Activated CD4-positive, alpha-beta T cell treated with anti-CD3 and anti-CD28 coated beads for 36 hours (primary cell): ENCODE measurements at regions of chr16 and their contacts with region 1.

Region 1: GRCh38 chr16:3150346-3151218 is 15.8 kb downstream of the ZNF213 start:
- DNase-seq: peak; percentile 99
- ATAC-seq: peak; percentile 85
- H3K4me3 Mint-ChIP-seq: peak overlapping the region; percentile 79
- H3K27ac Mint-ChIP-seq: peak overlapping the region; percentile 89
- H3K4me1 Mint-ChIP-seq: peaks cover 22% of the 10 kb centered on the region
- H3K27me3 Mint-ChIP-seq: peaks cover 2% of the 10 kb centered on the region

Region 2: GRCh38 chr16:2854700-2855309 is 295.8 kb before region 1 on chr16:
- CTCF ChIA-PET with region 1: no interaction called
- POLR2A ChIA-PET with region 1: no interaction called
- intact Hi-C with region 1: no loop called
- DNase-seq: peak; percentile 53
- ATAC-seq: no peak
- H3K4me3 Mint-ChIP-seq: no peak overlapping the region
- H3K27ac Mint-ChIP-seq: no peak overlapping the region
- H3K4me1 Mint-ChIP-seq: peaks cover 4% of the 10 kb centered on the region
- H3K27me3 Mint-ChIP-seq: peaks cover 3% of the 10 kb centered on the region

Region 3: GRCh38 chr16:3003582-3004302 is 146.8 kb before region 1 on chr16:
- CTCF ChIA-PET with region 1: no interaction called
- POLR2A ChIA-PET with region 1: no interaction called
- intact Hi-C with region 1: loop called in 1 of 2 experiments (anchors 1 kb)
- DNase-seq: peak; percentile 99
- ATAC-seq: peak; percentile 100
- H3K4me3 Mint-ChIP-seq: peak overlapping the region; percentile 32
- H3K27ac Mint-ChIP-seq: no peak overlapping the region
- H3K4me1 Mint-ChIP-seq: peaks cover 23% of the 10 kb centered on the region
- H3K27me3 Mint-ChIP-seq: peaks cover 6% of the 10 kb centered on the region

Region 4: DNA sequence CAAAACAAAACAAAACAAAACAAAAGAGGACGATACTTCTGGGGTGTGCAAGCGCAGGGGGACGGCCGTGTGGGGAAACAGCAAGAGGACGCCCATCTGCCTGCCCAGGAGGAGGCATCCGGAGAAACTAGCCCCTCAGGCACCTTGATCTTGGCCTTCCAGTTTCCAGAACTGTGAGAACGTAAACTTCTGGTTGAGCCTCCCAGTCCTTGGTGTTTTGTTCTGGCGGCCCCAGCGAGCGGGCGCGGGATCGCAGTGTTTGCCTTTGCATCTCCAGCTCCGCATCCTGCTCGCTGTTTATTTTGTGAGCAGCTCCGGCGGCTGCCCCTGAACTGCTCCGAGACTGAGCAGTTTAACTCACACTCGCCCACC is 105.2 kb before region 1 on chr16:
- CTCF ChIA-PET with region 1: no interaction called
- POLR2A ChIA-PET with region 1: no interaction called
- intact Hi-C with region 1: no loop called
- DNase-seq: peak; percentile 64
- ATAC-seq: peak; percentile 59
- H3K4me3 Mint-ChIP-seq: peak overlapping the region; percentile 63
- H3K27ac Mint-ChIP-seq: no peak overlapping the region
- H3K4me1 Mint-ChIP-seq: peaks cover 14% of the 10 kb centered on the region
- H3K27me3 Mint-ChIP-seq: peaks cover 43% of the 10 kb centered on the region

Region 5: GRCh38 chr16:3074860-3075522 is 75.6 kb before region 1 on chr16:
- CTCF ChIA-PET with region 1: interaction called, 3 read pairs
- POLR2A ChIA-PET with region 1: no interaction called
- intact Hi-C with region 1: loop called in 1 of 2 experiments (anchors 1 kb)
- DNase-seq: peak; percentile 91
- ATAC-seq: peak; percentile 62
- H3K4me3 Mint-ChIP-seq: peak overlapping the region; percentile 78
- H3K27ac Mint-ChIP-seq: peak overlapping the region; percentile 99
- H3K4me1 Mint-ChIP-seq: peaks cover 90% of the 10 kb centered on the region
- H3K27me3 Mint-ChIP-seq: no peaks in the 10 kb centered on the region

Region 6: DNA sequence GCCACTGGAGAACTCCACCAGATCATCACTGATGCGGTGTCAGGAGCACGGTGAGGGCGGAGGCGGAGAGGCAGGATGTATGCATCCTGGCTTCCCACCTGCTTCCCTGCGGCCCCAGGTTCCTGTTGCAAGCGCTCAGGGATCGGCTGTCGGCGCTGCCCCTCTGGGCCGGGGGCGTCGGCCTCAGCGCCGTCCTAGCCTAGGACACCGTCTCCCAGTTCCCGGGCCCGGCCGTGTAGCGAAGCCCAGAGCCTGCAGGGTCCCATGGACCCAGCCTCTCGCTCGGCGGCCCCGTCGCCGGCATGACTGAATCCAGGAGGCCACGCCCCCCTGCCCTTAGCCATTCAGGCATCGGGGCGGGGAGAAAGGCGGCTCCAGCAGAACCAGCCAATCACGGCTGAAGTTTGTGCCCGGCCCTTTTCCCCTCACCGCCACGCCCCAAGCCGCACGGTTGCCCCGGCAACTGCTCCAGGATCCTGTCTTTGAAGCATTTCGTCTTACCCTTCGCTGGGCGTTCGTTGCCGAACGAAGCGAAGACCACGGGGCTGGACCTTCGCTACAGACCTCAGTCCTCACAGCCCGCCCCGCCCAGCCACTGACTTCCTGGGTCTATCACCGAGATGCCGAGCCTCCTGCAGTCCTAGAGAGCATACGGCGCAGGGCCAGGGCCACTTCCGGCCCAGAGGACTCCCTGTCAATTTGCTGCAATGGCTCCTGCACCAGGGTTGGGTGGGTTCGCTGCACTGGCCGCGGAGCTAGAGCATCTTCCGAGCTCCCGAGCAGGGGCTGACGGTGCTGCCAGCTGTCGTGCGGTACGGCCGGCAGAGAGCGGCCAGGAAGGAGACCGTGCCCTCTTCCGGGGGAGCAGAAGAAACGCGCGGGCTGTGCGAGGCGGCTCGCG is 26.3 kb before region 1 on chr16:
- CTCF ChIA-PET with region 1: interaction called, 21 read pairs
- POLR2A ChIA-PET with region 1: interaction called, 5 read pairs
- intact Hi-C with region 1: loop called in 1 of 2 experiments (anchors 1 kb)
- DNase-seq: peak; percentile 99
- ATAC-seq: peak; percentile 92
- H3K4me3 Mint-ChIP-seq: peak overlapping the region; percentile 90
- H3K27ac Mint-ChIP-seq: peak overlapping the region; percentile 90
- H3K4me1 Mint-ChIP-seq: peaks cover 30% of the 10 kb centered on the region
- H3K27me3 Mint-ChIP-seq: no peaks in the 10 kb centered on the region

Region 7: GRCh38 chr16:3173892-3174617 is 23.5 kb after region 1 on chr16:
- CTCF ChIA-PET with region 1: interaction called, 6 read pairs
- POLR2A ChIA-PET with region 1: interaction called, 4 read pairs
- intact Hi-C with region 1: loop called (anchors 1 to 2 kb)
- DNase-seq: peak; percentile 61
- ATAC-seq: peak; percentile 10
- H3K4me3 Mint-ChIP-seq: peak overlapping the region; percentile 47
- H3K27ac Mint-ChIP-seq: peak overlapping the region; percentile 26
- H3K4me1 Mint-ChIP-seq: peaks cover 37% of the 10 kb centered on the region
- H3K27me3 Mint-ChIP-seq: peaks cover 51% of the 10 kb centered on the region

Region 8: GRCh38 chr16:3234543-3235541 is 84.3 kb after region 1 on chr16 and contains the start of gene ZNF200:
- CTCF ChIA-PET with region 1: no interaction called
- POLR2A ChIA-PET with region 1: no interaction called
- intact Hi-C with region 1: loop called in 1 of 2 experiments (anchors 1 kb)
- DNase-seq: peak; percentile 98
- ATAC-seq: peak; percentile 94
- H3K4me3 Mint-ChIP-seq: peak within 1 kb of the TSS; percentile 89
- H3K27ac Mint-ChIP-seq: peak within 1 kb of the TSS; percentile 96
- H3K4me1 Mint-ChIP-seq: peaks cover 30% of the 10 kb centered on the region
- H3K27me3 Mint-ChIP-seq: no peaks in the 10 kb centered on the region
- total RNA-seq, gene ZNF200: 8.3 to 9.0 TPM

Region 9: GRCh38 chr16:3400779-3401688 is 250.5 kb after region 1 on chr16 and contains the starts of genes ZNF174 and ZSCAN32:
- CTCF ChIA-PET with region 1: interaction called, 3 read pairs
- POLR2A ChIA-PET with region 1: no interaction called
- intact Hi-C with region 1: loop called in 1 of 2 experiments (anchors 1 kb)
- DNase-seq: peak; percentile 99
- ATAC-seq: peak; percentile 99
- H3K4me3 Mint-ChIP-seq: peak within 1 kb of the TSS; percentile 91
- H3K27ac Mint-ChIP-seq: peak within 1 kb of the TSS; percentile 83
- H3K4me1 Mint-ChIP-seq: peaks cover 49% of the 10 kb centered on the region
- H3K27me3 Mint-ChIP-seq: no peaks in the 10 kb centered on the region
- total RNA-seq, gene ZNF174: 7.4 to 9.5 TPM
- total RNA-seq, gene ZSCAN32: 15.7 to 17.4 TPM